ENCODE measurements at regions of chr19 and their contacts with region 1.

Region 1: DNA sequence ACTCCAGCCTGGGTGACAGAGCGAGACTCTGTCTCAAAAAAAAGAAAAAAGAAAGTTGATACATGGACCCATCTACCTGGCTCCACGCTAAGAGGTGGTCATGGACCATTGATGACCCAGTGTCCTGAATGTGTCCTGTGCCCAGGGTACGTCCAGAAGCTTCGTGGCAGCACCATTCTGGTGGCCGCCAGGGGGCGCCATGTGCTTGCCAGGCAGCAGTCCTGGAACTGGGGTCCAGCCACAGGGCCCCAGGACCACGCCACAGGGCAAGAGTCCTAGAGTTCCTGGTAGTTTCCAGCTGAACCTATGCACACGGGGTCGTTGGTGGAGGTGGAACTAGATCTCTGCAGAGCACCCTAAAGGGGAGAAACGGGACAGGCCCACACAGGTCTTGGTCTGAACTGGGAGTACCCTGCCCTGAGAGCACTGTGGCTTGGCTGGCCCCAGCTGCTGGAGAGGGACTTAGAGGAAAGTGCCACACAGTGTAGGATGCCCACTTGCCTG is 19.9 kb upstream of the FBXO27 start:
- DNase-seq: peak; percentile 62
- H3K4me3 Mint-ChIP-seq: no peak overlapping the region
- H3K27ac Mint-ChIP-seq: no peak overlapping the region
- H3K4me1 Mint-ChIP-seq: no peaks in the 10 kb centered on the region
- H3K27me3 Mint-ChIP-seq: no peaks in the 10 kb centered on the region
- CTCF ChIP-seq: peak; percentile 90

Region 2: DNA sequence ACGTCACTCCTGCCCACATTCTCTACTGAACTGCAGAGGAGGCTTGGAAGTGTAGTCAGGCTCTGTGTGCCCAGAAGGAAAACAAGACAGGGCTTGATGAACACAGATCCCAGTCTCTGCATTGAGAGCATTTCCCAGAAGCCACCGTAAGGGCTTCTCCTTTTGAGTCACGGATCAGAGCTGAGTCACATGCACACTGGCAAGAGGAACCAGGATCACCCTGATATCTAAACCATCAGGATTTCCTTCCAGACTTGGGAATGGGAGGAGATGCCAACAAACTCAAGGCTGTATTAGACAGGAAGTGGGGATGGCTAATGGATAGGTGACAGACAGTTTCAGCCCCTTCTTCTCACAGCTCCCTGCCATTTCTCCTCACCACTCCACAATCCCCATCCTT is 59.0 kb before region 1 on chr19:
- CTCF ChIA-PET with region 1: no interaction called
- POLR2A ChIA-PET with region 1: no interaction called
- intact Hi-C with region 1: no loop called
- DNase-seq: peak; percentile 80
- H3K4me3 Mint-ChIP-seq: no peak overlapping the region
- H3K27ac Mint-ChIP-seq: peak overlapping the region; percentile 51
- H3K4me1 Mint-ChIP-seq: peaks cover 16% of the 10 kb centered on the region
- H3K27me3 Mint-ChIP-seq: no peaks in the 10 kb centered on the region
- CTCF ChIP-seq: no peak

Region 3: DNA sequence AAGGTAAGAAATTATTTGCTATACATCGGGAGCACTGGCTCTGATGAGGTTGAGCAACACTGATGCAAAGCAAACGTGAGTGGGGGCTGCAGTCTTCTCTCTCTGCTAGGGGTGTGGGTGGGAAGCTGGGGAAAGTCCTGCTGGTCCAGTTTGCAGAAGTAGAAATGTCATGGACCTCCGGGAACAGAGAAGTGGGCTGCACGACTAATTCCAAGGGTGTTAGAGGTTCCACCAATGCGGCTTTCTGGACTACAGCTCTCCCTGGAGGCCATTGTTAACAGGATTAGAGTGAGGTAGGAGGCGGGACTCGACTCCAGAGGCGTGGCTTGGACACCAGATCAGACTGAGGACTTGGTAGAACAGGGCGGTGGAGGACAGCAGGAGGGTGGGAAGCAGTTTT is 14.2 kb before region 1 on chr19:
- CTCF ChIA-PET with region 1: interaction called, 11 read pairs
- POLR2A ChIA-PET with region 1: interaction called, 4 read pairs
- intact Hi-C with region 1: no loop called
- DNase-seq: peak; percentile 68
- H3K4me3 Mint-ChIP-seq: no peak overlapping the region
- H3K27ac Mint-ChIP-seq: no peak overlapping the region
- H3K4me1 Mint-ChIP-seq: no peaks in the 10 kb centered on the region
- H3K27me3 Mint-ChIP-seq: no peaks in the 10 kb centered on the region
- CTCF ChIP-seq: peak; percentile 5

Region 4: DNA sequence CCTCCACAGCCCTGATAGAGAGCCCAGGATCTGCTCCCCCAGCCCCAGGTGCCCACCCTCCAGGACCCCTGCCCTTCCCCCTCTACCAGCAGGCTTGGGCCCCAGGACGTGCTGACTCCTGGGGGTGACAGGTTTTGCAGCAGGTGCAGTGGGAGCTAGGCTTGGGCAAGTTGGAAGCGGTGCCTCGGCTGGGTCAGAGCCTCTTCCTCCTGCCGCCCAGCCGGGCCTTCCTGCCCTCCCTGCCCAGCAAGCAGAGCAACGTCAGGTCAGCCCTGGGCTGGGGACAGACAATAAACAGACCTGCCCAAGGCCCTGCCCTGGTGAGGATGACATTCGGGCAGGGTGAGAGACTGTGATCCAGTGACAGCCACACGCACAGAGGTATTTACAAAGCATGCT is 135.3 kb after region 1 on chr19:
- CTCF ChIA-PET with region 1: interaction called, 7 read pairs
- POLR2A ChIA-PET with region 1: no interaction called
- intact Hi-C with region 1: loop called (anchors 1 kb)
- DNase-seq: no peak
- H3K4me3 Mint-ChIP-seq: no peak overlapping the region
- H3K27ac Mint-ChIP-seq: no peak overlapping the region
- H3K4me1 Mint-ChIP-seq: peaks cover 6% of the 10 kb centered on the region
- H3K27me3 Mint-ChIP-seq: no peaks in the 10 kb centered on the region
- CTCF ChIP-seq: peak; percentile 17

Measured in MCF 10A (cell line).